ENCODE measurements at regions of chr16 and their contacts with region 1.

Region 1: DNA sequence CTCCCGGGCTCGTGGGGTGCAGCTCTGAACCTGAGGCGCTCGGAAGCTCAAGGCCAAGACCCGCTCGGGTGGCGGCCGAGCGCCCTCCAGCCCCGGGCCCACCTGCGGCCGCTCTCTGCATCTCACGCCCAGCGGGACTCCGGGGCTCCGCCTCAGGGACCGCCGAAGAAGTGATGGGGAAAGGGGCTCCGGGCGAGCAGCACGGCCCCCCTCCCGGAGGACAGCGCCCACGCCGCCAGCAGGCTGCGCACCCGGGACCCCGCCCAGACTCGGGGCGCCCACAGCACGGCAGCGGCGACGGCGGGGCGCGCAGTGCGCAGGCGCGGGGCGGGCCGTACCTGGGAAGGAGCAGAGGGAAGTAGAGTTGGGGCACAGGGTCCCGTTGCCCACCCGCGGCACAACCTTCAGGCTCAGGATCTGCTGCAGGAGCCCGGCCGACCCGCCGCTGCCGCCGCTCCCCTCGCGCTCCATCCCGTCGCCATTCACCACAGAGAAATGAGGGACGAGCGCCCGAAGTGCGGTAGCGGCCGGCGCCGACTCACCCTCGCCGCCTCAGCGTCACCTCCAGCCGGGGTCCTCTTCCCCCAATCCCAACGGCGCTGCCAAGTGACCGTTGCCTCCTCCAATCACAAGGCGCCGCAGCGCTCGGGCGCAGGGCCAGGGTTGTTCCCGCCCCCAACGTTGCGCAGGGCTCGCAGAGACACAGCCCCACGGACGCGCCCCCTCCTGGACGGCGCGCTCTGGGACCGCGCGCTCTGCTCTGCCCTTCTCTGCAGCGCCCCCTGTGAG is at the start of gene TMEM170A:
- DNase-seq: peak; percentile 98
- H3K4me3 ChIP-seq: peak within 1 kb of the TSS; percentile 69 to 85
- H3K27ac ChIP-seq: peak within 1 kb of the TSS; percentile 80 to 95
- H3K4me1 ChIP-seq: peaks cover 0 to 3% of the 10 kb centered on the region in 2 experiments; a peak in 2 of 4 replicates
- H3K27me3 ChIP-seq: no peaks in the 10 kb centered on the region
- CTCF ChIP-seq: peak; percentile 100
- EP300 ChIP-seq: no peak
- RAD21 ChIP-seq: peak; percentile 77; the same call in 1 of the 2 replicates
- polyA plus RNA-seq, gene TMEM170A: 9.2 and 11.0 TPM in 2 replicates

Region 2: DNA sequence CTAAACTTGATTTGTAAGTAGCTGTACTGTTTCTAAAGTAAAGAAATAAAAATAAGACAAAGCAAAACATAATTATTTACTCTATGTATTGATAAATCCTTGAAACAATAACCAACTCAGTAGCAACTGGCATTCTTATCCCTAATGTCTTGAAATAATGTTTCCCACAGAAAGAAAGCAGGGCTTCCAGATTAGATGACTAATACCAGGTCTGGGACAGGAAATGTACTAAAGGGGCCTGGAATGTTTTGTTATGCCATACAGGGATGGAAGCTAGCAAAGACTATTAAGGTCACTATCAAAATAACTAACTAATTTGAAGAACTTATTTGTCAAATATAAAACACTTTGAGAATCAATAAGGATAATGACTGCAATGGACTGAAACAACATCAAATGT is 113.1 kb before region 1 on chr16:
- CTCF ChIA-PET with region 1: no interaction called
- POLR2A ChIA-PET with region 1: no interaction called
- DNase-seq: peak; percentile 27
- H3K4me3 ChIP-seq: no peak overlapping the region
- H3K27ac ChIP-seq: peak overlapping the region; percentile 75 to 97
- H3K4me1 ChIP-seq: peaks cover 0 to 9% of the 10 kb centered on the region in 2 experiments; a peak in 2 of 4 replicates
- H3K27me3 ChIP-seq: no peaks in the 10 kb centered on the region
- CTCF ChIP-seq: no peak
- EP300 ChIP-seq: peak; percentile 38 to 83; a peak in 3 of 4 replicates
- RAD21 ChIP-seq: no peak

Region 3: DNA sequence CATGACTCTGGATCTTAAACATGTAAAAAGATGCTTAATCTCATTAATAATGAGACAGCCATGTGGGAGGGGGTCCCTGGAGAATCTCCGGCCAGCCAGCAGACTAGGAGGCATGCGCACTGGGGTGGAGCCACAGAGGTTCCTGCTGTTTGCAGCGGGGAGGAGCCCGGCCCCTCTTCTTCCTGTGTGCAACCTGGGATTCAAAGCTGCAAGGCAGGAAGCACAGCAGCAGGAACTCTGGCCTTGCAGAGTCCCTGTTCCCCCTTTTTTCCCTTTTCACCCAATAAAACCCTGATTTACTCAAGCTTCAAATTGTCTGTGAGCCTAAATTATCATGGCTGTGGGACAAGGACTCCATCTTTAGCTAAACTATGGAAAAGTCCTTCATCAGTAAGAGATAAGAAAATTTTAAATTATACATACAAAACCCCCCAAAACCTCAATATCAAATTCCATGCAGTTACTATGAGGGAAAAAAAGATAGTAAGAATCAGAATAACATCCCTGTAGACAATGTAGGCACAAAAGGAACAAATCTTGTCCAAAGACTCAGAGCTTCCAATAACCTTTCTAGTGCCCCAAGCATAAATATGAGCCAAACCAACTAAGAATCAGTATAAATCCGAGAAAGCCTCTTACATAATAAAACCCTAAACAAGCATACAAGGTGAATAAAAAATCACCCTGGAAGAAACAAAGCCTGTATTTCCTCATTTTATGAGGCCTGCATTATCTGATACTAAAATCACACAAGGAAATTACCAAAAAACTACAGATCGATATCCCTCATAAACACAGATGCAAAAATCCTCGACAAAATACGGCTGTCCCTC is 43.1 kb before region 1 on chr16:
- CTCF ChIA-PET with region 1: interaction called, 15 read pairs
- POLR2A ChIA-PET with region 1: no interaction called
- DNase-seq: peak; percentile 71
- H3K4me3 ChIP-seq: peak overlapping the region in 1 of 2 experiments; percentile 31; a peak in 1 of 4 replicates
- H3K27ac ChIP-seq: peak overlapping the region; percentile 47 to 86
- H3K4me1 ChIP-seq: peaks cover 9 to 19% of the 10 kb centered on the region in 2 experiments; a peak in 3 of 4 replicates
- H3K27me3 ChIP-seq: no peaks in the 10 kb centered on the region
- CTCF ChIP-seq: no peak
- EP300 ChIP-seq: no peak
- RAD21 ChIP-seq: no peak

Region 4: DNA sequence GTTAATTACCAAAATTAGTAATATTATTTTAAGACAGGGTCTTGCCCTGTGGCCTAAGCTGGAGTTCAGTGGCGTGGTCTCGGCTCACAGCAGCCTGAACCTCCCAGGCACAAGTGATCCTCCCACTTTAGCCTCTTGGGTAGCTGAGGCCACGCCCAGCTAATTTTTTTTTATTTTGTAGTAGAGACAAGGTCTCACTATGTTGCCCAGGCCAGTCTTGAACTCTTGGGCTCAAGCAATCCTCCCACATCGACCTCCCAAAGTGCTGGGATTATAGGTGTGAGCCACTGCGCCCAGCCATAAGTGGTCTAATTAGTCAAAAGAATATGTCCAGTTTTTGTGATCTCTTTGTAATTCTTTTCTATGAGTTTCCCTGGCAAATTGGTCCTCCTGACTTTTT is 19.0 kb before region 1 on chr16:
- CTCF ChIA-PET with region 1: interaction called, 13 read pairs
- POLR2A ChIA-PET with region 1: no interaction called
- DNase-seq: no peak
- H3K4me3 ChIP-seq: no peak overlapping the region
- H3K27ac ChIP-seq: no peak overlapping the region
- H3K4me1 ChIP-seq: peaks cover 6 to 13% of the 10 kb centered on the region in 2 experiments; a peak in 3 of 4 replicates
- H3K27me3 ChIP-seq: no peaks in the 10 kb centered on the region
- CTCF ChIP-seq: no peak
- EP300 ChIP-seq: no peak
- RAD21 ChIP-seq: no peak

Region 5: GRCh38 chr16:75495076-75495674 is 30.9 kb after region 1 on chr16 and contains the start of gene CHST6:
- CTCF ChIA-PET with region 1: interaction called, 22 read pairs
- POLR2A ChIA-PET with region 1: no interaction called
- DNase-seq: peak; percentile 67
- H3K4me3 ChIP-seq: peak within 1 kb of the TSS in 1 of 2 experiments; percentile 37; a peak in 2 of 4 replicates
- H3K27ac ChIP-seq: no peak within 1 kb of the TSS
- H3K4me1 ChIP-seq: peaks cover 7 to 12% of the 10 kb centered on the region in 2 experiments; a peak in 2 of 4 replicates
- H3K27me3 ChIP-seq: no peaks in the 10 kb centered on the region
- CTCF ChIP-seq: no peak
- EP300 ChIP-seq: no peak
- RAD21 ChIP-seq: no peak
- polyA plus RNA-seq, gene CHST6: 0.26 and 0.30 TPM in 2 replicates